HEK293 (cell line): ENCODE measurements at regions of chr1 and their contacts with region 1.

Region 1: GRCh38 chr1:107535091-107535490 is 394.3 kb downstream of the NTNG1 start:
- H3K4me3 ChIP-seq: no peak overlapping the region
- H3K27ac ChIP-seq: no peak overlapping the region
- H3K4me1 ChIP-seq: no peaks in the 10 kb centered on the region
- CTCF ChIP-seq: no peak

Region 2: GRCh38 chr1:107378527-107379270 is 156.4 kb before region 1 on chr1:
- CTCF ChIA-PET with region 1: no interaction called
- POLR2A ChIA-PET with region 1: no interaction called
- H3K4me3 ChIP-seq: no peak overlapping the region
- H3K27ac ChIP-seq: no peak overlapping the region
- H3K4me1 ChIP-seq: no peaks in the 10 kb centered on the region
- CTCF ChIP-seq: no peak

Region 3: GRCh38 chr1:107750358-107750959 is 215.4 kb after region 1 on chr1:
- CTCF ChIA-PET with region 1: interaction called, 76 read pairs
- POLR2A ChIA-PET with region 1: no interaction called
- H3K4me3 ChIP-seq: no peak overlapping the region
- H3K27ac ChIP-seq: no peak overlapping the region
- H3K4me1 ChIP-seq: no peaks in the 10 kb centered on the region
- CTCF ChIP-seq: peak; percentile 51; the same call in 1 of the 2 replicates